Tibial artery (tissue), 4 donors: ENCODE measurements at regions of chr19 and their contacts with region 1.

Region 1: DNA sequence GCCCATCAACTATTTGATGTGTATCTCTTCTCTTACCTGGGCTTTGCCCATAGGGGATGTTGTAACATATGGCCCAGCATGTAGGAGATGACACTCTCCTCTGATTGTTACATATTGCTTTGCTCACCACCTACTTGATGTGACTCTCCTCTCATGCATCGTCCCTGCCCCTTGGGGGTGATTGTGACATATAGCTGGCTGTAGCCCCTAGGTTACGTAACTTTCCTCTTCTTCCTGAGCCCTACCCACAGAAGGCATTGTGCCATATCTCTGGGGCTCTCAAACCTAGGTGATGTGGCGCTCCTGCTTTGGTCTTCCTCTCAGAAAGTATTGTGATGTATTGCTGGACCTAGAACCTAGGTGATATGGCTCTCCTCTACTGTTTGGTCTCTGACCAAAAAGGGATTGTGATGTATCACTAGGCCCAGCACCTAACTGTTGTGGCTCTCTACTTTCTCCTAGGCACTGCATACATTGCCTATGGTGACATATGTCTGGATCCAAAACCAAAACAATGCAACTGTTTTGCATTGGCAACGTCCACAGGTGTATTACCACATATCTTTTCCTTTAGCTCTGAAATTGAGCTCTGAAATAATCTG is 71.9 kb upstream of the ZNF724 start:
- DNase-seq: no peak
- H3K4me3 ChIP-seq: no peak overlapping the region
- H3K27ac ChIP-seq: no peak overlapping the region
- H3K4me1 ChIP-seq: no peaks in the 10 kb centered on the region
- H3K27me3 ChIP-seq: no peaks in the 10 kb centered on the region
- CTCF ChIP-seq: no peak

Region 2: GRCh38 chr19:23093832-23094231 is 228.2 kb before region 1 on chr19:
- intact Hi-C with region 1: no loop called
- DNase-seq: no peak
- H3K4me3 ChIP-seq: no peak overlapping the region
- H3K27ac ChIP-seq: no peak overlapping the region
- H3K4me1 ChIP-seq: no peaks in the 10 kb centered on the region
- H3K27me3 ChIP-seq: no peaks in the 10 kb centered on the region
- CTCF ChIP-seq: no peak

Region 3: DNA sequence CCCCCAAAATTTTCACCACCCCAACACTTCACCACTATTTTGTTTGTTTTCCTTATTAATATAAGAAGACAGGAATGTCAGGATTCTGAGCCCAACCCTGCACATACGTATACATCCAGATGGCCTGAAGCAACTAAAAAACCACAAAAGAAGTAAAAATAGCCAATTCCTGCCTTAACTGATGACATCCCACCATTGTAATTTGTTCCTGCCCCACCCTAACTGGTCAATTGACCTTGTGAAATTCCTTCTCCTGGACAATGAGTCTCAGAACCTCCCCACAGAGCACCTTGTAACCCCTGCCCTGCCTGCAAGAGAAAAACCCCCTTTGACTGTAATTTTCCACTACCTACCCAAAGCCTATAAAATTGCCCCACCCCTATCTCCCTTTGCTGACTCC is 232.5 kb after region 1 on chr19:
- intact Hi-C with region 1: loop called (anchors 10 kb)
- DNase-seq: no peak
- H3K4me3 ChIP-seq: no peak overlapping the region
- H3K27ac ChIP-seq: no peak overlapping the region
- H3K4me1 ChIP-seq: no peaks in the 10 kb centered on the region
- H3K27me3 ChIP-seq: no peaks in the 10 kb centered on the region
- CTCF ChIP-seq: no peak